ENCODE measurements at regions of chr1 and their contacts with region 1.

Region 1: DNA sequence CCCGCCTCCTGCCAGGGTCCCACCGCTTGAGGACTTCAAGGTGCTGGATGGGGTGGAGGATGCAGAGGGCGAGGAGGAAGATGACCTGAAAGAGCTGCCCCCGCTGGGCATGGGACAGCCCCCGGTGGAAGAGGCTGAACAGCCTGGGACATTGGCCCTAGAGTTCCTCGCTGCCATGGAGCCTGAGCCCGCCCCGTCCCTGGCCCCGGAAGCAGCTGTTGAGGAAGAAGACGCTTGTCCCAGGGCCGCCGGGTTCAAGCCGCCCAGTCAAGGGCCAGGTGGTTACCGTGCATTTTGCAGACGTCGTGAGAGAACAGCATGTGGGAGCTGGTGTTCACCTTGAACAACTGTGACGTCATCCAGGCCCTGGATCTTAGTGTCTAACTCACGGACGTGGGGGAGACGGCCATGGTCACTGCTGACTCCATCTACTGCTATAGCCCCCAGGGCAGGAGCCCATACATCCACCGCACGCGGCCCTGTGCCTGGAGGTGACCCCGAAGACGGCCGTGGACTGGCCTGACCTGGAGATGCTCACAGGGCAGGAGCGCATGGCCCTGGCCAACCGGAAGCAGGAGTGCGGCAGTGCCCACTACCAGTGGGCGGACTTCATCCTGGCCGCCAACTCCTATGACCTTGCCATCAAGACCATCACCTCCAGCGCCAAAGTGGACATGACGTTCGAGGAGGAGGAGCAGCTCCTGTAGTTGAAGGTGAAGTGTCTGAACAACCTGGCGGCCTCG is 90.1 kb downstream of the PPP1R12B start:
- DNase-seq: no peak

Region 2: GRCh38 chr1:202376247-202376646 is 62.4 kb before region 1 on chr1:
- intact Hi-C with region 1: no loop called
- DNase-seq: no peak

Region 3: GRCh38 chr1:202471246-202471645 is 32.6 kb after region 1 on chr1:
- intact Hi-C with region 1: no loop called
- DNase-seq: no peak

Region 4: GRCh38 chr1:202728951-202729350 is 290.3 kb after region 1 on chr1:
- intact Hi-C with region 1: loop called in 1 of 2 experiments (anchors 10 kb)
- DNase-seq: no peak

Region 5: GRCh38 chr1:202802998-202803932 is 364.7 kb after region 1 on chr1:
- intact Hi-C with region 1: no loop called
- DNase-seq: no peak